ENCODE measurements at regions of chr3 and their contacts with region 1.

Region 1: GRCh38 chr3:17204049-17204650 is 319.4 kb downstream of the PLCL2 start:
- DNase-seq: no peak
- H3K4me3 ChIP-seq: no peak overlapping the region
- H3K27ac ChIP-seq: no peak overlapping the region
- H3K4me1 ChIP-seq: no peaks in the 10 kb centered on the region
- H3K27me3 ChIP-seq: no peaks in the 10 kb centered on the region
- CTCF ChIP-seq: no peak
- EP300 ChIP-seq: no peak
- POLR2A ChIP-seq: no peak

Region 2: GRCh38 chr3:15731024-15731423 is 1473.1 kb before region 1 on chr3:
- in situ Hi-C with region 1: no loop called
- intact Hi-C with region 1: loop called (anchors 5 kb)
- DNase-seq: no peak
- H3K4me3 ChIP-seq: no peak overlapping the region
- H3K27ac ChIP-seq: no peak overlapping the region
- H3K4me1 ChIP-seq: no peaks in the 10 kb centered on the region
- H3K27me3 ChIP-seq: no peaks in the 10 kb centered on the region
- CTCF ChIP-seq: no peak
- EP300 ChIP-seq: no peak
- POLR2A ChIP-seq: no peak

Region 3: DNA sequence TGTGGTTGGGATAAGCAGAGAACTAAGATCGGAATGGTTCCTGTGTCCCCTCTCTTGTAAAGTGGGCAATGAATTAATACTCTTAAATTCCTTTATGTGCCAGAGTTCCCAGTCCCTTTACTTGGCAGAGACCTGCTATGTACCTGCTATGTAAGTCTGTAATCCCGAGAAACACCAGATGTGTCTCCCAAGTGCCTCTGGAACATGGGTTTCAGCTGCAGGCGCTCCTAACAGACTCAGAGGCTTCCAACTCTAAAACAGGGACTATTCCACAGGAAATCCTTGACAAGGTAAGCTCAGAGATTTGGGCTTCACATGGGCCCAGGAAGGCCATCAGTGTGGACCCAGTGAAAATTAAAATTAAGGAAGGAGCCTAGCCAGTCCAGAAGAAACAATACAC is 437.1 kb before region 1 on chr3:
- in situ Hi-C with region 1: no loop called
- intact Hi-C with region 1: no loop called
- DNase-seq: no peak
- H3K4me3 ChIP-seq: no peak overlapping the region
- H3K27ac ChIP-seq: no peak overlapping the region
- H3K4me1 ChIP-seq: no peaks in the 10 kb centered on the region
- H3K27me3 ChIP-seq: no peaks in the 10 kb centered on the region
- CTCF ChIP-seq: no peak
- EP300 ChIP-seq: no peak
- POLR2A ChIP-seq: no peak

Region 4: DNA sequence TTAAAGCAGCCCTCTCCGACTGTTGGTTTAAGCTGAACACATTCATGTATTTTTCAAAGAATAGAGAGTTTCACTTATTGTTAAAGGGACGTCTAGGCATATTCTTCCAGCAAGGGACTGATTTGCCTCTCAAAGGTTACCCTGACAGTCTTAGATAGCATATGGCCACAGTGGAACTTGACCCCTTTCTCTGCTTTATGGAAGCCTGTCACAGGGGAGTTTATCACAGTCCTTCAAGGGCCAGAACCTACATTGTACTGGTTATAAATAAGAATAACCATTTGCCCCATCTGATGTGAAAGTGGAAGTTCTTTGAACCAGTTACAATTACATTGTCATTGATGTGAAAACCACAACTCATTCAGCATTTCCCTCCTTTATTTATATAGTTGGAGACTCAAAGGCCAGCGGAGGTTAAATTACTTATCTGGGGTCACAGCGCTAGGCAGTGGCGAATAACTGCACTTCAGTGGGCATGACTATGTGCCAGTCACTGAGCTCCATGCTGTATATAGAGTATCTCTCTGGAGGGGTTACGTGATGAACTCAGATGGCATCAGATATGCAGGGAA is 598.8 kb after region 1 on chr3:
- in situ Hi-C with region 1: no loop called
- intact Hi-C with region 1: loop called (anchors 5 kb)
- DNase-seq: no peak
- H3K4me3 ChIP-seq: no peak overlapping the region
- H3K27ac ChIP-seq: no peak overlapping the region
- H3K4me1 ChIP-seq: no peaks in the 10 kb centered on the region
- H3K27me3 ChIP-seq: no peaks in the 10 kb centered on the region
- CTCF ChIP-seq: no peak
- EP300 ChIP-seq: no peak
- POLR2A ChIP-seq: no peak